A549 (cell line): ENCODE measurements at regions of chr16 and their contacts with region 1.

Region 1: DNA sequence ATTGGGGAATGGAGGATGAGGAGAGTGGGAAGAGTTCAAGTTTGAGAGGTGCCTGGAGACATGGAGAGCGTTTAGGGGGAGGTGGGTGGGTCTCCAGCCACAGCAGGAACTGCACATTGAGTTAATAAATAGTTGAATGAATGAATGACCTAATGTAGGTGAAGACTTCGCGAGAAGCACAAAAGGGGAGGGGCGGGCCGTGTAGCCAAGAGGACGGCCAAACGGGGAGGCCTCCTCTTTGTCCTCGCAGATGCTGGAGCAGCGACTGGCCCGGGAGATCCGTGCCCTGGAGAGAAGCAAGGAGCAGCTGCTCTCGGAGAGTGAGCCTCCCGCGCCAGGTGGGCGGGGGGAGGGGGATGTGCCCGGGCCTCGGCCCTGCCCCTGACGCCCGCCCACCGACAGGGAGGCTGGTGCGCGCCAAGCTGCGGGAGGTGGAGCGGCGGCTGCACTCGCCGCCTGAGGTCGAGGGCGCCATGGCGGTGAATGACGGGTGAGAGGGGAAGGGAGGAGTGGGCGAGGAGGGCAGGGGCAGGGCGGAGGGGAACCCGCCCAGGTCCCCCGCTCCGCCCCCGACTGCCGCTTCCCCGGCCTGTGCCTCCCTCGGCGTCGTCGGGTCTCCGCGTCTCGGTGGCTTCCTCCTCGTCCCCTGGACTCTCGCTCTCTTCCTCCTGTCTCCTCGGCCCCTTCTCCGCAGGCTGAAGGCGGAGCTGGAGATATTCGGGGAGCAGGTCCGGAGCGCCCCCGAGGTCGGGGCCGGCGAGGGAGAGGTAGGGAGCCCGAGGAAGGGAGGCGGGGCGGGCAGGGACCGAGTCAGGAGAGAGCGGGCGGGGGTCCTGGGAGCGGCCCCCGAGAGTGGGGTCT is 12.9 kb downstream of the SYCE1L start:
- DNase-seq: peak; percentile 83 to 86
- ATAC-seq: peak; percentile 58 to 74
- H3K4me3 ChIP-seq: peak overlapping the region; percentile 82
- H3K27ac ChIP-seq: peak overlapping the region; percentile 94
- H3K4me1 ChIP-seq: peaks cover 33% of the 10 kb centered on the region
- CTCF ChIP-seq: no peak
- EP300 ChIP-seq: no peak
- POLR2A ChIP-seq: peak; percentile 76
- RAD21 ChIP-seq: no peak

Region 2: GRCh38 chr16:77133706-77134105 is 78.4 kb before region 1 on chr16:
- CTCF ChIA-PET with region 1: no interaction called
- POLR2A ChIA-PET with region 1: no interaction called
- DNase-seq: no peak
- ATAC-seq: no peak
- H3K4me3 ChIP-seq: no peak overlapping the region
- H3K27ac ChIP-seq: no peak overlapping the region
- H3K4me1 ChIP-seq: no peaks in the 10 kb centered on the region
- CTCF ChIP-seq: no peak
- EP300 ChIP-seq: no peak
- POLR2A ChIP-seq: no peak
- RAD21 ChIP-seq: no peak

Region 3: GRCh38 chr16:77190478-77191258 is 21.4 kb before region 1 on chr16 and contains the start of gene MON1B:
- CTCF ChIA-PET with region 1: interaction called, 3 read pairs
- POLR2A ChIA-PET with region 1: interaction called, 14 read pairs
- DNase-seq: peak; percentile 99
- ATAC-seq: peak; percentile 97 to 98
- H3K4me3 ChIP-seq: peak within 1 kb of the TSS; percentile 94
- H3K27ac ChIP-seq: peak within 1 kb of the TSS; percentile 90 to 96
- H3K4me1 ChIP-seq: peaks cover 14% of the 10 kb centered on the region; the same call in 2 of the 3 replicates
- CTCF ChIP-seq: no peak
- EP300 ChIP-seq: no peak
- POLR2A ChIP-seq: peak; percentile 77
- RAD21 ChIP-seq: no peak
- polyA plus RNA-seq, gene MON1B: 18.0 and 27.2 TPM in 2 replicates

Region 4: DNA sequence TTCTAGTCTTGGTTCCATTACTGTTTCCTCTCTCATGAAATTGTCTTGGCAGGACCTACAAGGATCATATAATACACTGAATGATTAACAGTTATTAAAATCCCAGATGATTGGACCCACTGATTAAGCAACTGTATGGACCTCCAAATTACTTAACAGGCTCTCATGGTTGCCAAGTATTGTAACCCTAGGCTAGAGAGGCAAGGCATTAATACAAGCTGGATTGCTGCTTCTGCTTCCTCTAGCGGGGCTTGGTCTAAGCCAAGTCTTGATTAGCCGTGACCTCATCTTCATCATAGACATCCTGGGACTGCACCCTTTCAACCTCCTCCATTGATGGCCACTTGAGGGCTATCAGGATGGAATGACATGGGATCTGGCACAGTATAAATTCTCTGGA is 34.0 kb after region 1 on chr16:
- CTCF ChIA-PET with region 1: no interaction called
- POLR2A ChIA-PET with region 1: no interaction called
- DNase-seq: no peak
- ATAC-seq: no peak
- H3K4me3 ChIP-seq: no peak overlapping the region
- H3K27ac ChIP-seq: no peak overlapping the region
- H3K4me1 ChIP-seq: no peaks in the 10 kb centered on the region
- CTCF ChIP-seq: no peak
- EP300 ChIP-seq: no peak
- POLR2A ChIP-seq: no peak
- RAD21 ChIP-seq: no peak